CD8-positive, alpha-beta memory T cell (primary cell): ENCODE measurements at regions of chr16 and their contacts with region 1.

Region 1: DNA sequence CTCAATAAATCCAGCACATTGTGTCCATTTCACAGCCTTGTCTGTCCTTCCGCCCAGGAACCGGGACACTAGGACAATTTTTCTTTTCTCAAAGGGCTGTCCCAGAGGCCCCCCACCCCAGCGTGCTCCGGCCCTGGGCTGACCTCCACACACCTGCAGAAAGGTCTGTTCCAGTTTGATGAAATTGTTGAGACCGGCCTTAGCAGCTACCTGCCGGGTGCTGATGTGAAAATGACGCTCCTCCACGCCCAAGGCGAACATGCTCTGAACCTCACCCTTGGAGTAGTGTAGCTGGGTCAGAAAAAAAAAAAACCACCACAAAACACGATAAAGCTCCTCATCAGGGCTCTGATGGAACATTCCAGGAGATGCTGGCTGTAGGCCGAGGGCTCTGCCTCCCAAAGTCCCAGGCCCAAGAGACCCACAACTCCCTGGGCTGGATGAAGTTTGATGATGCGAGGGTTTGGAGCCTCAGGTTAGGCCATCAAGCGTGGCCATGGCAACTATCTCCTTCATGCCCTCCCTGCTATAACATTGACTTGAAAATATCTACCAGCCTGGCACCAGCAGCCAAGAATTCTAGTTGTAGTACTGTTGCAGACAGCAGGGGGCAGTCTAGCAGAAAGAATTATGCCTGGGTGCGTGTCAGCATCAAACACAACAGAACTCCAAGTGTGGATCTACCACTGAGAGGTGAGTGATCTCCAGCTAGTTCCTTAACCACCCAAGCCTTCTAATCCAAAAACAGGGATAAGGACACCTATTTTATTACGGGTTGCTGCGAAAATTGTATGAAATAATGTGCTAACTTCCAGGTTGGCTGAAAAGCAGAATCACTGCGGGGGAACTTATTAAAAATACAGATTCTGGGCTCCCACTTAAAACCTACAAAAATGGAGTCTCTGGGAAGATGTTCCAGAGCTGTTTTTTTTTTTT is 62.1 kb downstream of the RMI2 start:
- DNase-seq: peak; percentile 35 to 69 (median 61)
- H3K4me3 ChIP-seq: no peak overlapping the region
- H3K4me3 Mint-ChIP-seq: no peak overlapping the region
- H3K27ac ChIP-seq: no peak overlapping the region
- H3K27ac Mint-ChIP-seq: peak overlapping the region in 1 of 8 donors; percentile 50
- H3K4me1 ChIP-seq: no peaks in the 10 kb centered on the region
- H3K4me1 Mint-ChIP-seq: peaks cover 0 to 3% (median 0%) of the 10 kb centered on the region in 3 donors
- H3K27me3 ChIP-seq: no peaks in the 10 kb centered on the region
- H3K27me3 Mint-ChIP-seq: peaks cover 0 to 3% of the 10 kb centered on the region in 2 donors

Region 2: GRCh38 chr16:11396241-11397048 is 10.9 kb before region 1 on chr16:
- CTCF ChIA-PET with region 1: interaction called, 15 read pairs
- POLR2A ChIA-PET with region 1: no interaction called
- DNase-seq: peak; percentile 41 to 73 (median 54)
- H3K4me3 ChIP-seq: no peak overlapping the region
- H3K4me3 Mint-ChIP-seq: no peak overlapping the region
- H3K27ac ChIP-seq: no peak overlapping the region
- H3K27ac Mint-ChIP-seq: peak overlapping the region in 1 of 8 donors; percentile 61
- H3K4me1 ChIP-seq: no peaks in the 10 kb centered on the region
- H3K4me1 Mint-ChIP-seq: peaks cover 0 to 5% (median 1%) of the 10 kb centered on the region in 3 donors
- H3K27me3 ChIP-seq: no peaks in the 10 kb centered on the region
- H3K27me3 Mint-ChIP-seq: no peaks in the 10 kb centered on the region